ENCODE measurements at regions of chr11 and their contacts with region 1.

Region 1: GRCh38 chr11:61516675-61517572 is 8.4 kb downstream of the LRRC10B start:
- DNase-seq: peak; percentile 53
- H3K4me3 Mint-ChIP-seq: peak overlapping the region; percentile 32
- H3K27ac Mint-ChIP-seq: no peak overlapping the region
- H3K4me1 Mint-ChIP-seq: peaks cover 7% of the 10 kb centered on the region
- H3K27me3 Mint-ChIP-seq: peaks cover 19% of the 10 kb centered on the region

Region 2: DNA sequence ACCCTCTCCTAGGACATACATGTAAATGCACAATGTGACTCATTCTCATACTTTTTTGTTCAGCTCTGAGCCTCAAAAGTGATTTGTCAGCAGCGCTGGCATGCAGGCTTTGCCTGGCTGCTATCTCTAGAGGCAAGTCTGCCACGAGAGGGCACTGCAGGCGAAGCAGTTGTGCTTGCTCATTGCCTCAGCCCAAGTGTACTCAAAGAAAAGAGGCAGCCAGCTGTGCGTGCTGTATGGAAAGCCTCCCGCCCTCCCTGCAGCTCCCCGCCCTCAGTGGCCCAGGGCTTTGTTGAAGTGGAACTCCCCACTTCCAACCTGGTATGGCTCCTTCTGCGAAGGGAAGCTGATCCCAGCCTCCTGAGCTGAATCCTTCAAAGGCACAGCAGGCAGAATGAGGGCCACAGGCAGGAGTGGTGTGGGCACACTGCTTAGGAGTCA is 70.7 kb before region 1 on chr11:
- CTCF ChIA-PET with region 1: interaction called, 69 read pairs
- intact Hi-C with region 1: loop called (anchors 1 kb)
- DNase-seq: peak; percentile 96
- H3K4me3 Mint-ChIP-seq: no peak overlapping the region
- H3K27ac Mint-ChIP-seq: peak overlapping the region; percentile 38
- H3K4me1 Mint-ChIP-seq: peaks cover 27% of the 10 kb centered on the region
- H3K27me3 Mint-ChIP-seq: no peaks in the 10 kb centered on the region

Region 3: GRCh38 chr11:61486771-61487170 is 30.2 kb before region 1 on chr11:
- CTCF ChIA-PET with region 1: interaction called, 152 read pairs
- intact Hi-C with region 1: no loop called
- DNase-seq: no peak
- H3K4me3 Mint-ChIP-seq: no peak overlapping the region
- H3K27ac Mint-ChIP-seq: no peak overlapping the region
- H3K4me1 Mint-ChIP-seq: no peaks in the 10 kb centered on the region
- H3K27me3 Mint-ChIP-seq: no peaks in the 10 kb centered on the region

Region 4: GRCh38 chr11:61526956-61527731 is 10.2 kb after region 1 on chr11:
- CTCF ChIA-PET with region 1: interaction called, 17 read pairs
- intact Hi-C with region 1: no loop called
- DNase-seq: no peak
- H3K4me3 Mint-ChIP-seq: no peak overlapping the region
- H3K27ac Mint-ChIP-seq: no peak overlapping the region
- H3K4me1 Mint-ChIP-seq: no peaks in the 10 kb centered on the region
- H3K27me3 Mint-ChIP-seq: peaks cover 4% of the 10 kb centered on the region

Region 5: DNA sequence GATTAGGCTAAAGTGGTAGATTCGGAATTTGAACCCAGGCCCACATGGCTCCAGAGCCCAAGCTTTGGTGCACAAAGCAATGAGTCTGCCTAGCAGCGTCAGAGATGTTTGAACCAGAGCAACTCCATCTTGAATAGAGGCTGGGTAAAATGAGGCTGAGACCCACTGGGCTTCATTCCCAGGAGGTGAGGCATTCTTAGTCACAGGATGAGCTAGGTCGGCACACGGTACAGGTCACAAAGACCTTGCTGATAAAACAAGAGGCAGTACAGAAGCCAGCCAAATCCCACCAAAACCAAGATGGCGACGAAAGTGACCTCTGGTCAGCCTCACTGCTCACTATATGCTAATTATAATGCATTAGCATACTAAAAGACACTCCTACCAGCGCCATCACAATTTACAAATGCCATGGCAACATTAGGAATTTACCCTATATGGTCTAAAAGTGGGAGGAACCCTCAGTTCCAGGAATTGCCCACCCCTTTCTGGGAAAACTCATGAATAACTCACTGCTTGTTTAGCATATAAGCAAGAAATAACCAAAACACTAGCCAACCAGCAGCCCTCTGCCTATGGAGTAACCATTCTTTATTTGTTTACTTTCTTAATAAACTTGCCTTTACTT is 123.0 kb after region 1 on chr11:
- CTCF ChIA-PET with region 1: interaction called, 12 read pairs
- intact Hi-C with region 1: no loop called
- DNase-seq: no peak
- H3K4me3 Mint-ChIP-seq: no peak overlapping the region
- H3K27ac Mint-ChIP-seq: no peak overlapping the region
- H3K4me1 Mint-ChIP-seq: no peaks in the 10 kb centered on the region
- H3K27me3 Mint-ChIP-seq: no peaks in the 10 kb centered on the region

Region 6: DNA sequence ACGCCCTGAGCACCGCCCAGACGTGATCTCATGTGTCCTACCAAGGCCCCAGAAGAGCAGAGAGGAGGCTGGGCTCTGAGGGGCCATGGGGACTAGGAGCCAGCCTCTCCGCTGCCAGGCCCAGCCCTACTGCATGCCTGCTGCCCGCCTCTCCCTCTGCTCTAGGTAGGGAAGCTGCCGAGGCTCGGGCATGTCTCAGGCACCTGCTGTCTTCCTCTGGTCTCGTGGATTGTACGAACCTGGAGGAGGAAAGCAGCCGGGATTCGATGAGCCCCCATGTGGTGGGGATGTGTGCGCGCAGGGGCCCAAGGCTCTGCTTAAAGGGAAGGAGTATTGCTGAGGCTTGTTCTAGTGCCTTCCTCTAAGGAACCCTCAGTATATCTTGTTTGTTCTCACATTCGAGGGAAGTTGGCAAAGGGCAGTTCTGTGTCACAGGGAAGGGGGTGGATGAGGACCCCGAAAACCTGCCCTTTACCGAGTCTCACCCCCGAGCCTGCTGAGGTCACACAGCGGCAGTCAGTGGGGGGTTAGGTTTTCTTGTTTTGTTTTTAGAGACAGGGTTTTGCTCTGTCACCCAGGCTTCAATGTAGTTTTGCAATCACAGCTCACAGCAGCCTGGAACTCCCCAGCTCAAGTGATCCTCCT is 184.4 kb after region 1 on chr11:
- CTCF ChIA-PET with region 1: no interaction called
- intact Hi-C with region 1: no loop called
- DNase-seq: no peak
- H3K4me3 Mint-ChIP-seq: no peak overlapping the region
- H3K27ac Mint-ChIP-seq: no peak overlapping the region
- H3K4me1 Mint-ChIP-seq: peaks cover 19% of the 10 kb centered on the region
- H3K27me3 Mint-ChIP-seq: no peaks in the 10 kb centered on the region

Region 7: DNA sequence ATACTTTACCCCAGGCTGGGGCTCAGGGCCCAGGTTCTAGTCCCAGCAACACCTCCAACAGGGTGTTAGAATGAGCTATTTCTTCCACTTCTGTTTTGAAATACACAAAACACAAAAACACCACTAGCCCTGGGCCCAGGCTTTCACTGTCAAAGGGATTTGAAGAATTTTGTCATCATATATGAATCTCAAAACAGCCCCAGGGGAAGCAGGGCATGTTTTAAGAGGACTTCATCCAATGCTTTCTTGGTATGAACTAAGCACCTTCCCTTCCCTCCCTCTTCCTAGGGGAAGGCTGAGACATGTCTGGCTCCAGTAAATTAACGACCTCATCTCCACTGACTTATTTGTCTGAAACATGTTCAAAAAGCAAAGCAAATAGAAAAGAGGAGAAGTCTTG is 531.1 kb after region 1 on chr11:
- CTCF ChIA-PET with region 1: no interaction called
- intact Hi-C with region 1: no loop called
- DNase-seq: no peak
- H3K4me3 Mint-ChIP-seq: no peak overlapping the region
- H3K27ac Mint-ChIP-seq: no peak overlapping the region
- H3K4me1 Mint-ChIP-seq: no peaks in the 10 kb centered on the region
- H3K27me3 Mint-ChIP-seq: no peaks in the 10 kb centered on the region